Heart right ventricle (tissue), 16 donors: ENCODE measurements at regions of chr19 and their contacts with region 1.

Region 1: GRCh38 chr19:3423183-3423829 is 56.9 kb downstream of the NFIC start:
- DNase-seq: peak; percentile 32 to 40
- ATAC-seq: peak in 5 of 8 donors; percentile 20 to 60 (median 45)
- H3K4me3 ChIP-seq: no peak overlapping the region
- H3K27ac ChIP-seq: peak overlapping the region in 9 of 10 donors; percentile 20 to 83 (median 47)
- H3K4me1 ChIP-seq: peaks cover 12 to 34% (median 23%) of the 10 kb centered on the region in 9 donors
- H3K27me3 ChIP-seq: no peaks in the 10 kb centered on the region
- CTCF ChIP-seq: no peak

Region 2: DNA sequence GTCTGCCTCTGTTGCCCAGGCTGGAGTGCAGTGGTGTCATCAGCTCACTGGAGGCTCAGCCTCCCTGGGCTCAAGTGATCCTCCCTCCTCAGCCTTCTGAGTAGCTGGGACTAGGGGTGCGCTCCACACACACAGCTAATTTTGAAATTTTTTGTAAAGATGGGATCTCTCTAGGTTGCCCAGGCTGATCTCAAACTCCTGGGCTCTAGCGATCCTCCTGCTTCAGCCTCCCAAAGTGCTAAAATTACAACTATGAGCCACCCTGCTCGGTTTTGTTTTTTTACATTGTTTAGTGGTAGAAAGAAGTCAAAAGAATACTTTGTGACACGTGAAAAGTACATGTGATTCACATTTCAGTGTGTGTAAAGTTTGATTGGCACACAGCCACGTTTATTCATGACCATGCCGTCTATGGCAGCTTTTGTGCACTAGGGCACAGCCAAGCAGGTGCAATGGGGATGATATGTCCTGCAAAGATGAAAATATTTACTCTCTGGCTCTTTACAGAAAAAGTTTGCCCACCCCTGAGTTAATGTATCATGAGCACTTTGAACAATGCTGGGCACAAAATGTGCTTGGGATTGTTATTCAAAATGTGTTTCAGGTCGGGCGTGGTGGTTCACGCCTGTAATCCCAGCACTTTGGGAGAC is 73.2 kb before region 1 on chr19:
- intact Hi-C with region 1: loop called in 3 of 10 experiments (anchors 5 to 10 kb)
- DNase-seq: no peak
- ATAC-seq: no peak
- H3K4me3 ChIP-seq: no peak overlapping the region
- H3K27ac ChIP-seq: no peak overlapping the region
- H3K4me1 ChIP-seq: peaks cover 8 to 17% (median 13%) of the 10 kb centered on the region in 9 donors
- H3K27me3 ChIP-seq: no peaks in the 10 kb centered on the region
- CTCF ChIP-seq: no peak